ENCODE measurements at regions of chr2 and their contacts with region 1.

Region 1: DNA sequence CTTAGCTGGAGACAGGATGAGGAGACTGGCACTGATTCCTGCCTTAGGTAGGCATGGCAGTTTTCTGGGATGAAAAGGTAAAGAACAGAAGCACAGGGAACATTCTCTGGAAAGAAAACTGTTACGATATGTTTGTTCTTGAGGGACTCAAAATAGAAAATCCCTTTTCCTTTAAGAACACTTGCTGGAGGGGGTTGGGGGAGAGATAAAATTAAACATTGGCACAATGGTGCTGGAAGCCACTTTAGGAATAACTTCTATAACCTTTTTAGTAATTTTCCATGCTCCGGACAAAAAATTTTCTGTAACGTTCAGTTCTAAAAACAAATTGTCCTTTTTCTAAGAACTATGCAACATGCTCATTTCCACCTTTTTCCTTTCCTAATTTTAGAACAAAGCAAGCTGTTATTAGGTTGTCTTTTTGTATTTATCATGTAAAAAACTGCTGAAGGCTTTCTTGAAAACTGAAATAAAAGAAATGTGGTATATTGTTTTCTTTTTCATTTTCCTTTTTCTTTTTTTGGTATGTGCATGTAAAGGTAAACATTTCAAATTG is 343.8 kb downstream of the EPHA4 start:
- DNase-seq: no peak
- H3K4me3 ChIP-seq: peak overlapping the region in 1 of 2 donors; percentile 19
- H3K27ac ChIP-seq: peak overlapping the region; percentile 76 to 84
- H3K4me1 ChIP-seq: peaks cover 0 to 15% of the 10 kb centered on the region in 2 donors
- H3K27me3 ChIP-seq: no peaks in the 10 kb centered on the region
- CTCF ChIP-seq: no peak

Region 2: DNA sequence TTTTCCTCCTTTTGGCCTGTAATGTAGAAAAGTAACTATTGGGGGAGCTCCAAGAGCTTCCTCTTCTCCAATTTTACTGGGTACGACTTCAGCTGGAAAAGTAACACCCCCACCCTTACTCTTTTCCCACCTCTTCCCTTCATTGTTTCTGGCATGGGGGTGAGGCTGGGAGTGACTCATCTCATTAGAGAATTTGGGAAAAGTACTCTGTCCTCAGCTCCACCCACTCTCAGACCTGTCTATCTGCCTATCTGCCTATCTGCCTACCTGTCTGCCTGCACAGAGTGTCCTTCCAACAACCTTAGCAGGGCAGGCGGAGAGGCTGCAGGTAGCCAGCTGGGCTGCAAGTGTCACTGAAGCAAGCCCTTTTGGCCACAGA is 250.2 kb after region 1 on chr2:
- intact Hi-C with region 1: loop called (anchors 5 kb)
- DNase-seq: no peak
- H3K4me3 ChIP-seq: no peak overlapping the region
- H3K27ac ChIP-seq: peak overlapping the region in 1 of 2 donors; percentile 31
- H3K4me1 ChIP-seq: peaks cover 0 to 15% of the 10 kb centered on the region in 2 donors
- H3K27me3 ChIP-seq: no peaks in the 10 kb centered on the region
- CTCF ChIP-seq: no peak

Region 3: DNA sequence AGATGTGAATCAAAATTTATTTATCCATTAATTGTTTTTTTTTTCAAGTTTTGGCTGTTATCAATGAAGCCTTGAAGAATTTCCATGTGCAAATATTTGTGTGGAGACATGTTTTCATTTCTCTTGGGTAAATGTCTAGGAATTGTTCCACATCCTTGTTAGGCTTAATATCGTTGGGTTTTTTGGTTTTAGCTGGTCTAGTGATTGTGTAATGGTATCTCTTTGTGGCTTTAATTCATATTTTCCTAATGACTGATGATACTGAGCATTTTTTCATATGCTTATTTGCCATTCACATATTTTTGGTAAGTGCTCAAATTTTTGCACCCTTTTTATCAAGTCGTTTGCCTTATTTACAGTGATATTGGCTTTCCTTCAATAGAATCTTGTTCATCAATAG is 594.1 kb after region 1 on chr2:
- intact Hi-C with region 1: no loop called
- DNase-seq: no peak
- H3K4me3 ChIP-seq: no peak overlapping the region
- H3K27ac ChIP-seq: no peak overlapping the region
- H3K4me1 ChIP-seq: no peaks in the 10 kb centered on the region
- H3K27me3 ChIP-seq: no peaks in the 10 kb centered on the region
- CTCF ChIP-seq: no peak